ENCODE measurements at regions of chr7 and their contacts with region 1.

Region 1: GRCh38 chr7:65503434-65504158 is 129.9 kb downstream of the ZNF92 start:
- DNase-seq: no peak
- ATAC-seq: no peak
- H3K4me3 Mint-ChIP-seq: no peak overlapping the region
- H3K27ac Mint-ChIP-seq: no peak overlapping the region
- H3K4me1 Mint-ChIP-seq: peaks cover 7% of the 10 kb centered on the region
- H3K27me3 Mint-ChIP-seq: no peaks in the 10 kb centered on the region
- CTCF ChIP-seq: no peak

Region 2: DNA sequence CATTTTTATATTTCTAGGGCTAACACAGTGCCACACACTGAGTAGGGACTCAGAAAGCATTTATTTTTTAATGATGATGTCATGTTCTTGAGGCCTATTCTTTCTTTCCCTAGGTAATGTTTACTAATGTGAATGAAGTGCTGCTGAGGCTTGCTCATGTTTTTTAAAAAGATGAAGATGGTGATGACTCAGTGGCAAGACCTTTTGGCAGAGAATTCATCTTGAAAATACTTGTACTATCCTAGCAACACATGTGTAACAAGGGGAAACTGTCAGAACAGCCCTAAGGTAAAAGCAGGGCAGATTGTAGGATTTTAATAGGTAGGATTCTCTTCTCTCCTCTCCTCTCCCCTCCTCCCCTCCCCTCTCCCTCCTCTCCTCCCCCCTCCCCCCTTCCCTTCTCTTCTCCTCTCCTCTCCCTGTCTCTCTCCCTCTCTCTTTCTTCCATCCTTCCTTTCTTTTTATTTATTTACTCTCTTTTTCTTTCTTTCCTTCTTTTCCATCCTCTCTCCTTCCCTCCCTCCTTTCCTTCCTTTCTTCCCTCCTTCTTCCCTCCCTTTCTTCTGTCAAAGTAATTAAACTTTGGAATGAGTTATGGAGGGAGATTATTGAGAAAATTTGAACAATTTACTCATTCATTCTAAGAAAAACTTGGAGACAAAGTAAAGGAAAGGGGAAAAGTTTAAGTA is 54.6 kb before region 1 on chr7:
- CTCF ChIA-PET with region 1: no interaction called
- POLR2A ChIA-PET with region 1: no interaction called
- intact Hi-C with region 1: loop called (anchors 10 kb)
- DNase-seq: no peak
- ATAC-seq: no peak
- H3K4me3 Mint-ChIP-seq: no peak overlapping the region
- H3K27ac Mint-ChIP-seq: no peak overlapping the region
- H3K4me1 Mint-ChIP-seq: peaks cover 22% of the 10 kb centered on the region
- H3K27me3 Mint-ChIP-seq: peaks cover 5% of the 10 kb centered on the region
- CTCF ChIP-seq: no peak

Measured in activated B cell treated with CpG ODN at 0.5 μM for 24 hours (primary cell).